ENCODE measurements at regions of chr20 and their contacts with region 1.

Region 1: DNA sequence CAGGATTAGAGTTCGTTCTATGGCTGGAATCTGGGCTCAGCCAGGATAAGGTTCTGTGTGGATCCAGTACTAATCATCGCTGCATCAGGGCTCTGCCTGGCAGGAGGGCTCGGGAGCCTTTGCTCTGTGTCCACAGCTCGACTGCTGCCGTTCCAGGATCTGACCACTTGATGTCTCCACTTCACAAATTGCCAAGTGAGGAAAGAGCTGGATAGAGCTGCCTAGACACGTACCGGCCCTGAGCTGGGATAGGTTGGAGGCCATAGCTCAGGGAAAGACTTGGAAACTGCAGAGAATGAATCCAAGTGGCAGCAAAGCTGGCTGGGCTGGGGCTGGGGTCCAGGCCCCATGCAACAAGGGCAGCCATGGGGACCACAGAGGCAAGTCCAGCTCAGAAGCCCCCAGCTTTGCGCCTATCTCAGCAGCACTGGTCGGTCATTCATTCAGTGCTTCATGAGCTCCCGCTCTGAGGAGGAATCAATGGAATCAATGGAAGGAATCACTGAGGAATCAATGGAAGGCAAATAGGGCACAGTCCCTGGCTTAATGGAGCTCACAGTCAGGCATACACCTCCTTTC is 38.0 kb upstream of the TOP1 start:
- DNase-seq: peak; percentile 78
- H3K4me3 Mint-ChIP-seq: no peak overlapping the region
- H3K27ac Mint-ChIP-seq: peak overlapping the region; percentile 63
- H3K4me1 Mint-ChIP-seq: peaks cover 39% of the 10 kb centered on the region
- H3K27me3 Mint-ChIP-seq: no peaks in the 10 kb centered on the region

Region 2: GRCh38 chr20:40835321-40835720 is 155.3 kb before region 1 on chr20:
- CTCF ChIA-PET with region 1: no interaction called
- POLR2A ChIA-PET with region 1: no interaction called
- DNase-seq: no peak
- H3K4me3 Mint-ChIP-seq: no peak overlapping the region
- H3K27ac Mint-ChIP-seq: no peak overlapping the region
- H3K4me1 Mint-ChIP-seq: no peaks in the 10 kb centered on the region
- H3K27me3 Mint-ChIP-seq: peaks cover 12% of the 10 kb centered on the region

Region 3: DNA sequence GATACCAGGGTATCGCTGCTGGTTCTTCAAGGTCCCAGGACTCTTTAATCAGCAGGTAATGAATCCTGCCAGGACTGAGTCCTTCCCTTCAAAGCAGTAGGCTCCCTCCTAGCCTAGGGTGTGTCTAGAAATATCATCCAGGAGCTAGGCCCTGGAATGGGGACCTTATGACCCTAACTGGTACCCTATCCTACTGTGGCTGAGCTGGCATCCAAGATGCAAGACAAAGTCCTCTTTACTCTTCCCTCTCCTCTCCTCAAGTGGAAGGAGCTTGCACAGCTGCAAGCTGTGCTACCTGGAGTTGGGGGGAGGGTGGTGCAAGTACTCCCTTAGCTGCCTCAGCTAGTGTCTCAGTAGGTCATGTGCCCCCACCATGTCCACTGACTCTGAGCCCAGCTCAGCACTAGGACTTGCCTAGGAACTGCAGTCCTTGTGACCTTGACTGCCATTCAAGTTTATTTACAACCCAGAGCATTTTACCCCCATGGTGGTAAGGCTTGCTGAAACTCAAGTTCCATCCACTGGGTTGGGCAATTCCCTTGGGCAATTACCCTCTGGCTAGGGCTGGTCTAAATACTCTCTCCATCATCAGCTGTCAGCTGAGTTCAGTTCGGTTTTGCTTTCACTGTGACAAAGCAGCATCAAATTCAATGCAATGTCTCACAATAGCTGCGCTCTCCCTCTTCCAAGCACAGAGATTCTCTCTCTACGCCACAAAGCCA is 10.4 kb before region 1 on chr20:
- CTCF ChIA-PET with region 1: interaction called, 16 read pairs
- POLR2A ChIA-PET with region 1: no interaction called
- DNase-seq: no peak
- H3K4me3 Mint-ChIP-seq: no peak overlapping the region
- H3K27ac Mint-ChIP-seq: no peak overlapping the region
- H3K4me1 Mint-ChIP-seq: peaks cover 2% of the 10 kb centered on the region
- H3K27me3 Mint-ChIP-seq: peaks cover 23% of the 10 kb centered on the region

Region 4: DNA sequence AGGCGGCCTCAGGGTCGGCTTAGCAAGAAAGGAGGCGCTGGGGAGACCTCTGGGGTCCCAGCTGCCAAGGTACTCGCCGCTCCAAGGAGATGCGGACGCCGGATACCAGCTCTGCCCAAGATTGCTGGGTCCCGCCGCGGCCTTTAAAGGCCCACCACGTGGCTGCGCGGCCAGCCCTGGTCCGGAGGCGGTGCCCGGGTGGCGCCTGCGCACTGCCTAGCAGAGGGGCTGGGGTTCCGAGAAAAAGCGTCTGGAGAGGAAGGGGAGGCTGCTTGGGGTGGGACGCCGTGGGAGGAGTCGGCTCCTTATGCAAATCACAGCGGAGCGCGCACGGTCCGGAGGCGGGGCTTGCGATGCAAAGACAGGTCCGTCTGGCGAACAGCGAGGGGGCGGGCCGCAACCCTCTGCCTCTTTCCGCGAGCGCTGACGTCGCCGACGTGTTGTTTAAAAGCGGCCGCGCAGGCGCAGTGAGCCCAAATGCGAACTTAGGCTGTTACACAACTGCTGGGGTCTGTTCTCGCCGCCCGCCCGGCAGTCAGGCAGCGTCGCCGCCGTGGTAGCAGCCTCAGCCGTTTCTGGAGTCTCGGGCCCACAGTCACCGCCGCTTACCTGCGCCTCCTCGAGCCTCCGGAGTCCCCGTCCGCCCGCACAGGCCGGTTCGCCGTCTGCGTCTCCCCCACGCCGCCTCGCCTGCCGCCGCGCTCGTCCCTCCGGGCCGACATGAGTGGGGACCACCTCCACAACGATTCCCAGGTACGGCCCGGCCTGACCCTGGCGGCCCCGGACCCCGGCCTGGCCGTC is 37.9 kb after region 1 on chr20 and contains the start of gene TOP1:
- CTCF ChIA-PET with region 1: interaction called, 18 read pairs
- POLR2A ChIA-PET with region 1: interaction called, 7 read pairs
- DNase-seq: peak; percentile 100
- H3K4me3 Mint-ChIP-seq: peak within 1 kb of the TSS; percentile 88
- H3K27ac Mint-ChIP-seq: peak within 1 kb of the TSS; percentile 91
- H3K4me1 Mint-ChIP-seq: peaks cover 48% of the 10 kb centered on the region
- H3K27me3 Mint-ChIP-seq: no peaks in the 10 kb centered on the region
- total RNA-seq, gene TOP1: 67.5 to 68.0 TPM

Region 5: DNA sequence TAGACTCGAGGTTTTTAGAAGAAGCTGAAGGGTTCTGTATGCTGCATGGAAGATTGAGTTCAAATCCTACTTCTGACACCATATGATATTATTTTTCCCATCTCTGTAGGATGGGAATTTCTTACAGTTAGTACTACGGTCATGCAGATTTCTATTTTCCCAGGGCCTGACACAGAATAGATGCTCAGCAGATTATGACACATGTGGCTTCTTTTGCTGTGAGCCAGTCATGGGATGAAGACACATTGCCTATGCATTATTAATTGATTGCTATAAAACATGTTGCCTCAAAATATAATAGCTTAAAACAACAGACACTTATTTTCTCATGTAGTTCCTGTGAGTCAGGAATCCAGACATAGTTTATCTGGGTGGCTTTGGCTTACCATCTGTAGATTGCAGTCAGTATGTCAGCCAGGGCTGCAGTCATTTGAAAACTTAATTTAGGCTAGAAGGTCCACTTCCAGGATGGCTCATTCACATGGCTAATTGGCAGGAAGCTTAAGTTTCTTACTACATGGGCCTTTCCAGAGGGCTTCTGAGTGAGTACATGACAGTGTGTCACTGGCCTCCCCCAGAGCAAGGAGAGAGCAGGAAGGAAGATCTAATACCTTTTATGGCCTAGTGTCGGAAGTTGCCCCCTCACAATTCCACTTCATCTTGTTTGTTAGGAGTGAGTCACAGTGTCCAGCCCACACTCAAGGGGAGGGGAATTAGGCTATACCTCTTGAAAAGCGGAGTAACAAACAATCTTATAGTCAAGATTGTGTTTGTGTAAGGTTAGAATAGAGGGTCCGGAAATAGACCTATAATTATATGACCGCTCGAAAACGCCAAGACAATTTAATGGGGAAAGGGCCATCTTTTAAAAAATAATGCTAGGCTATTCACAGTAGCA is 67.6 kb after region 1 on chr20:
- CTCF ChIA-PET with region 1: interaction called, 19 read pairs
- POLR2A ChIA-PET with region 1: interaction called, 3 read pairs
- DNase-seq: no peak
- H3K4me3 Mint-ChIP-seq: no peak overlapping the region
- H3K27ac Mint-ChIP-seq: no peak overlapping the region
- H3K4me1 Mint-ChIP-seq: peaks cover 33% of the 10 kb centered on the region
- H3K27me3 Mint-ChIP-seq: no peaks in the 10 kb centered on the region

Region 6: DNA sequence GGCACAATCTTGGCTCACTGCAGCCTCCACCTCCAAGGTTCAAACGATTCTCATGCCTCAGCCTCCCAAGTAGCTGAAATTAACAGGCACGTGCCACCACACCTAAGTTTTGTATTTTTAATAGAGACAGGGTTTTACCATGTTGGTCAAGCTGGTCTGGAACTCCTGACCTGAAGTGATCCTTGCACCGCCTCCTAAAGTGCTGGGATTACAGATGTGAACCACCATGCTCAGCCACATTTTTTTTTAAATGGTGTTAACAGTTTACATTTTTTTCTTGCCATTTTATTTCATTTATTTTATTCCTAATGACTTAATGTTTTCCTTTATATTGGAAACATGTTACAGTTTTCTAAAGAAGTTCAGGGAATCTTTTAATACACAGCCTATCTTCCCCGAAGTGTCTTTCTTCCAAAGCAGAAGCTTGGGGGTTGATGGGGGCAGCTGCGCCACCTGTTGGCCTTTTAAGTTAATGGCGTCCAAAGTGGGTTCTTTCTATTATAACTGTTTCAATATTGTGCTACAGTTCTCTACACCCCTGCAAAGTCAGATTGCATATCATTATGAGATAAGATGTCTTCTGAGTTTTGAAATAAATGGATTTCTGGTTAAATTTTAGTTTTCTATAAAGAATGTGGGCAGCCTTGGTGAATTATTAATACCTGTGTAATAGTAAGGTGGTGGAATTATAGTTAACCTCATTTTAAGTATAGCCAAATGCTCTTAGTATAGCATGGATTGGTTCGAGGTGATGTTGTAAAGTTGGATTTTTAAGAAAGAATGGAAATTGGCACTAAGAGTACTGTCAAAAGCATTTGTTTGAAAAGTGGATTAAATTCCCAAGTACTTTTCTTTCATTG is 104.7 kb after region 1 on chr20:
- CTCF ChIA-PET with region 1: interaction called, 252 read pairs
- POLR2A ChIA-PET with region 1: interaction called, 18 read pairs
- DNase-seq: peak; percentile 63
- H3K4me3 Mint-ChIP-seq: no peak overlapping the region
- H3K27ac Mint-ChIP-seq: no peak overlapping the region
- H3K4me1 Mint-ChIP-seq: peaks cover 4% of the 10 kb centered on the region
- H3K27me3 Mint-ChIP-seq: no peaks in the 10 kb centered on the region

Region 7: DNA sequence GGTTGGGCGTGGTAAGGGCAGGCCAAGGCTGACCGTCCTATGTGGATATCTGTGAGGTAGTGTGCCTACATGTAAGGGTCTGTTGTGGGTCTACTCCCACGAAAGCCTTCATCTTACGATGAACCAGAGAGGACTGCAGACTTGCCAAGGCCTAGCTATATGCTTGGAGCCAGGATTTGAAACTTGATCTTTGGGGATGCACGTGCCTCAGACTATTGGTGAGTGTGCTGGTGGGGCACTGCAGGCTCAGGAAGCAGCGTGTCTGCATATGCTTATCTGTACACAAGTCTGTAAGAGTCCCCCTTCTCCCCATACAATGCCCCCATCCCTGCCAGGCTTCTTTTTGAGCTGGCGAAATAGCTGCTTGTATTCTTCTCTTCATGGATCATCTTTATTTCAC is 164.6 kb after region 1 on chr20:
- CTCF ChIA-PET with region 1: interaction called, 12 read pairs
- POLR2A ChIA-PET with region 1: interaction called, 5 read pairs
- DNase-seq: no peak
- H3K4me3 Mint-ChIP-seq: no peak overlapping the region
- H3K27ac Mint-ChIP-seq: peak overlapping the region; percentile 97
- H3K4me1 Mint-ChIP-seq: peaks cover 98% of the 10 kb centered on the region
- H3K27me3 Mint-ChIP-seq: no peaks in the 10 kb centered on the region

Measured in activated CD4-positive, alpha-beta memory T cell treated with anti-CD3 and anti-CD28 coated beads, Interleukin-2, amount 10 ng/mL, durations not matched to agents 7 days and 5 days (primary cell).